Vagina (tissue), 2 donors: ENCODE measurements at regions of chr2 and their contacts with region 1.

Region 1: GRCh38 chr2:24971536-24972314 is at the start of gene DNAJC27:
- DNase-seq: peak; percentile 98 to 99
- H3K4me3 ChIP-seq: peak within 1 kb of the TSS; percentile 79 to 90
- H3K27ac ChIP-seq: peak within 1 kb of the TSS; percentile 99
- H3K4me1 ChIP-seq: peaks cover 6% of the 10 kb centered on the region
- H3K27me3 ChIP-seq: no peaks in the 10 kb centered on the region
- CTCF ChIP-seq: no peak
- POLR2A ChIP-seq: peak in 1 of 2 donors; percentile 97
- total RNA-seq, gene DNAJC27: 11.3 TPM

Region 2: GRCh38 chr2:24920098-24920808 is 51.5 kb before region 1 on chr2 and contains the start of gene ADCY3:
- intact Hi-C with region 1: loop called (anchors 5 kb)
- DNase-seq: no peak
- H3K4me3 ChIP-seq: peak within 1 kb of the TSS; percentile 65 to 94
- H3K27ac ChIP-seq: peak within 1 kb of the TSS; percentile 90
- H3K4me1 ChIP-seq: peaks cover 41% of the 10 kb centered on the region
- H3K27me3 ChIP-seq: no peaks in the 10 kb centered on the region
- CTCF ChIP-seq: no peak
- POLR2A ChIP-seq: peak in 1 of 2 donors; percentile 23
- total RNA-seq, gene ADCY3: 90.6 TPM